CD4-positive, alpha-beta memory T cell (primary cell): ENCODE measurements at regions of chr6 and their contacts with region 1.

Region 1: DNA sequence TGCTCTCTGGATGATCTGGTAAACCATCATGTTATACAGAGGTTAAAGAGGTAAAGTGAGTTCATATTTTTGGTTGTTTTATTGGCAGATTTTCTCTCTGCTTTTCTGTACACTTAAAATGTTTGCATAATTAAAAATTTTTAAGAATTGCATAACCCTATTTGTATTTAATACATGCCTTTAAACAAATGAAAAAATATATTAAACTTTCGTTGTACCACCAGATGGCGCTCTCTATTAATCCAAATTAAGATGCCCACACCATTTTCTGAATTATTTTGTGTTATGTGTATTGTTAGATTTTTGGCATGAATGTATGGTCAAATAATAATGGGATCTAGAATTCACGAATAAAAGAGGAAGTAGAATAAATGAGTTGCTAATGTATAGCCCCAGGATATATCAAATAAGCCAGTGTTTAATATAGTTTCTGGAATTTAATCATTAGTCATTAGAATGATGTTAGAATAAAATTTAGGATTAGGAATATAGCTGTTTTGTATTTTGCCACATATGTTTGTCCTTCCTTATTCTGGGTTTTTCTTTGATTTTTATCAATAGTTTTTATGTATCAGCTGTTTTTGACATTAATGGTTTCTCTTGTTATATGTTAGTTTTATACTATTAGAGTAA is 38.9 kb downstream of the SMAP1 start:
- DNase-seq: peak in 4 of 5 donors; percentile 38 to 49 (median 48)
- H3K4me3 ChIP-seq: no peak overlapping the region
- H3K4me3 Mint-ChIP-seq: no peak overlapping the region
- H3K27ac ChIP-seq: no peak overlapping the region
- H3K27ac Mint-ChIP-seq: peak overlapping the region in 1 of 7 donors; percentile 23
- H3K4me1 ChIP-seq: peaks cover 32% of the 10 kb centered on the region
- H3K4me1 Mint-ChIP-seq: peaks cover 39 to 68% (median 53%) of the 10 kb centered on the region in 4 donors
- H3K27me3 ChIP-seq: no peaks in the 10 kb centered on the region
- H3K27me3 Mint-ChIP-seq: no peaks in the 10 kb centered on the region

Region 2: DNA sequence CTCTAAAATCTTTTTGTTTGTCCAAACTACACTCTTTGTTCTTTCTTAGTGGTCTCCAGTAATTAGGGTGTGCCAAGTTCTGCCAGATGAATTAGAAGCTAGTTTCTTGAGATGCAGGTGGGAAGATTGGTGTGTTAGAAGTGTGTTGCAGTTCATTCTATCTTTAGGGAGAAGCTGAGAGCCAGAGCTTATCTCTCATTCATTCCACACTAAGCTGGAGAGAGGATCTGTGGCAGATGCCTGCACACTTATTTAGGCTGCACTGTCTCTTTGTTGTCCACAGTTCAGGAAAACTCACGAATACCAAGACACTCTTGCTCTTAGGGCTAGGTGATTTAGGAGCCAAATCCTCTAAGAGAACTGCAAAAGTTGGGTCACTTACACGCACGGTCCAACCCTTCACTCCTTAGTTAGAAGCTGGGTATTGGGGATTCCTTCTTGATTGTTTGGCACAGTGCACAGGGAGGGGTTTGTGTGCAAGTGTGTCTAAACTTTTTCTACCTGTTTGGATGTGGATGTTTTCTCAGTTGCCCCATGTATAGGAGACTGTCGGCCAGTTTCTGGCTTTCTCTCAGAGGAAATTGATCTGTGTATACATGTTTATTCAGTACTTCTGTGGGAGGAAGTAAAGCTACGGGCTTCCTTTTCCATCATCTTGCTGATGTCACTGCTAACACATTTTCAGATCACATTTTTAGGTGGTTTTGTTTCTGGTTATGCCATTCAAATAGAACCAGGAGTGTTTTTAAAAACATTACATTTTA is 10.6 kb after region 1 on chr6:
- CTCF ChIA-PET with region 1: interaction called, 14 read pairs
- POLR2A ChIA-PET with region 1: no interaction called
- intact Hi-C with region 1: no loop called
- DNase-seq: peak in 4 of 5 donors; percentile 20 to 50 (median 34)
- H3K4me3 ChIP-seq: no peak overlapping the region
- H3K4me3 Mint-ChIP-seq: peak overlapping the region in 6 of 8 donors; percentile 1 to 62 (median 28)
- H3K27ac ChIP-seq: no peak overlapping the region
- H3K27ac Mint-ChIP-seq: peak overlapping the region in 6 of 7 donors; percentile 63 to 76 (median 72)
- H3K4me1 ChIP-seq: peaks cover 31% of the 10 kb centered on the region
- H3K4me1 Mint-ChIP-seq: peaks cover 40 to 74% (median 56%) of the 10 kb centered on the region in 4 donors
- H3K27me3 ChIP-seq: no peaks in the 10 kb centered on the region
- H3K27me3 Mint-ChIP-seq: no peaks in the 10 kb centered on the region

Region 3: DNA sequence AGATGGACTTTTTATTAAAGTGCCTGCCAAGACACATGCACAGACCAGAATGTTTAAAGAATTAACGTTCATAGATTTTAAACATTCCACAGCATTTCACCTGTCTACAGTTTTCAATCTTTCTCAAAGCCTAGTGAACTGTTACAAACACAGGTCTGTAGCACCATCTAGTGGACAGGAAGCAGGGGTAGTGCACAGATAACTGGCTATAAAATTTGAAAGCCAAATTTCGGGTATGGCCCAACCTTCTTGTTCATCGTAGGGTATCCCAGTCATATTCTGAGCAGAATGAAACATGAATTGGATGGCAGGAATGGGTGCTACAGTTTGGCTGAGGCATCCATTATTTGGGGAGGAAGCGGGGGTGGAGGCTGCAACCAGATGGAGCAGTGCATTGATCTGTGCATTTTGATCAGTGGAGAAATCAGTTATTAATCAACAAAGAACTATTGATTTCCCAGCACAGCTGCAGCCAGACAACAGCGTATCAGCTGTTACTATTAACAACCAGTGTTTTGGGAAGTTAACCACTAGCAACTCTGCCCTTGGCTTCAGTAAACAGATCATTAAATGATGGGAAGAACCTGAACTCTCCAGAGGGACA is 306.4 kb after region 1 on chr6:
- CTCF ChIA-PET with region 1: interaction called, 6 read pairs
- POLR2A ChIA-PET with region 1: no interaction called
- intact Hi-C with region 1: loop called (anchors 1 kb)
- DNase-seq: peak in 4 of 5 donors; percentile 29 to 37 (median 32)
- H3K4me3 ChIP-seq: no peak overlapping the region
- H3K4me3 Mint-ChIP-seq: no peak overlapping the region
- H3K27ac ChIP-seq: no peak overlapping the region
- H3K27ac Mint-ChIP-seq: no peak overlapping the region
- H3K4me1 ChIP-seq: no peaks in the 10 kb centered on the region
- H3K4me1 Mint-ChIP-seq: no peaks in the 10 kb centered on the region
- H3K27me3 ChIP-seq: no peaks in the 10 kb centered on the region
- H3K27me3 Mint-ChIP-seq: peaks cover 16 to 22% of the 10 kb centered on the region in 2 donors